BJ (cell line): ENCODE measurements at regions of chr13 and their contacts with region 1.

Region 1: DNA sequence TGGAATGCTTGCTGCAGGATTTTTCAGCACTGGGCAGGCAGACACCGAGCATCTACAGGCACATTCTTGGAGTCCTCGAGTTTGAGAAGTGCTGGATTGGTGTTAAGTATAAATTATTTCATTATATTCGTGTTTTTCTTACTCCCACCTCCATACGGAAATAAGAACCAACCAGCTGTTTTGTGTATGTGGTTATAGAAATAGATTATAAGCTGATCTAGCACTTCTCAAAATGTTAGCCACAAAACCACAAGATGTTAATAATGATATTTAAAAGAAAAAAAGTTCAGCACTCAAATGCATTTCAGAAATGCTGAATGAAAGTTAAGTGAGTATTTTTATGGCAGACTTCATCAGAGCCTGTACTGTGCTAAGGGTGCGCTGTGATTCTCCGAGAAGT is 24.0 kb upstream of the TEX29 start:
- DNase-seq: no peak
- H3K4me3 ChIP-seq: no peak overlapping the region
- H3K27me3 ChIP-seq: no peaks in the 10 kb centered on the region
- CTCF ChIP-seq: no peak

Region 2: GRCh38 chr13:111076156-111077013 is 220.0 kb before region 1 on chr13:
- CTCF ChIA-PET with region 1: no interaction called
- POLR2A ChIA-PET with region 1: no interaction called
- DNase-seq: no peak
- H3K4me3 ChIP-seq: no peak overlapping the region
- H3K27me3 ChIP-seq: no peaks in the 10 kb centered on the region; the same call in 1 of the 2 replicates
- CTCF ChIP-seq: no peak

Region 3: DNA sequence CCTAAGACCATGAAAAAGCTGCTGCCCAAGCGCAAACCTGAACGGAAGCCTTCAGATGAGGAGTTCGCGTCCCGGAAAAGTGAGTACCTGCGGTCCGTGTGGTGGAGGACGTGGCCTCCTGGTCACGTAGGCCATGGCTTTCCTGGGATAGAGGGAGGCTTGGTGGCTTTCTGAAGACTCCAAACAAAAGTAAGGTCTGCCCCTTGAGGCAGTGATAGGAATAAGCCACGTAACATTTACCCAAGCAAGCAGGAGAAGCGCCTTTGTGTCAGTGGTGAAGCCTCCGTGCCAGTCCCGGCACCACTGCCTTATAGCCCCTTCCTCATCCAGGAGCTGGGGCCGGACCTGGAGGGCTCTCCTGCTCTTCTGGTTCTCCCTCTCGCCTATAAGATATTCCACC is 10.3 kb before region 1 on chr13:
- CTCF ChIA-PET with region 1: interaction called, 11 read pairs
- POLR2A ChIA-PET with region 1: no interaction called
- DNase-seq: no peak
- H3K4me3 ChIP-seq: no peak overlapping the region
- H3K27me3 ChIP-seq: no peaks in the 10 kb centered on the region
- CTCF ChIP-seq: no peak